CD4-positive, alpha-beta T cell (primary cell): ENCODE measurements at regions of chr6 and their contacts with region 1.

Region 1: DNA sequence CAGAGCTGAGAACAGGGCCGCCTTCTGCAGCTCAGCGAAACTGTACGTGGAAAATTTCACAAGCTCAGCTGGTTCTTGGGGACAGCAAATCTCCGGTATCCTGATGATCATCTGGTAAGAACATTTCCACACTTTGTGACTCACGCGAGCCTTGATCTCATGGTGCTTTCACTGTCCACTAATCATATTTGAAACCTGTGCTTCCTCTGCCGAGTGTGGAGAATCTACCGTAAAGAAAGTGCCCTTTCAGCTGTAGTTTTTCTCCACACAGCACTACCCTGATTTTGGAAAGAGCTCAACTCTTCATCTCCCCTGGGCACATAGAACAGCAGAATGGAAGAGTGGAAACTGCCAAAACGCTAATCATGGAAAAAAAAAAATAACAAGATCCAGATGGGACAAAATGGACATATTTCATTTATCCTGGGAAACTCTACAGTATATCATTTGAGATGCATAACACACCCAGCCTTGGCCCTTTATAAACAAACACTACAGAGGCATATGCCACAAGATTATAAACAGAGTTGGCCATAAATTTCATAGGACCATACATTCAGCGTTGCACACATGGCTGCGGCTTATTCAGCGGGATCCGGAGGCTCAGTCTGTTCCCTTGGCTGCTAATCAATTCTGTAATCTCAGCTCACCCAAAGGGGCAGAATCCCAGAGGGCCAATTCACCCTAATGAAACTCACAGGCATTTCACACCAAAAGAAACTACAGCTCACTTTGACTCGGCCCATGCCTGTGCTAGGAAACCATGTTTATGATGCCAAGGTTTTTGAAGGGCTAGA is 434.5 kb downstream of the HDGFL1 start:
- DNase-seq: no peak
- ATAC-seq: no peak
- H3K4me3 ChIP-seq: no peak overlapping the region
- H3K4me3 Mint-ChIP-seq: no peak overlapping the region
- H3K27ac ChIP-seq: no peak overlapping the region
- H3K27ac Mint-ChIP-seq: no peak overlapping the region
- H3K4me1 ChIP-seq: no peaks in the 10 kb centered on the region
- H3K4me1 Mint-ChIP-seq: no peaks in the 10 kb centered on the region
- H3K27me3 ChIP-seq: no peaks in the 10 kb centered on the region
- H3K27me3 Mint-ChIP-seq: no peaks in the 10 kb centered on the region
- CTCF ChIP-seq: no peak

Region 2: DNA sequence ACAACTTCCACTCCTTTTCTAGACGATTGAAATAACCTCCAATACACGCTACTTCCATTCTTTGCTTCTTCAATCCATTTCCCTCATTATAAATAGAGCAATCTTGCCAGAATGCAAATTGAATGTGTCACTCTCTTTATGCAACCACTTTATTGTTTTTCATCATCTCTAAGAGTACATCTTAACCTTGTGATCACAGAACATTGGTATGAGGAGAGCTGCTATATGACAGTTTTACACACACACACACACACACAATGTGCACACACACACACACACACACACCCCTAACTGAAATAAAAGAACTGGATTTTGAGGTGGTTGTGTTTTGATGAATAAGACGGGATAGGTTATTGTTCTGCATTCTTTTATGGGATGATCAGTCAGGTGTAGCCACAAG is 247.5 kb before region 1 on chr6:
- CTCF ChIA-PET with region 1: no interaction called
- POLR2A ChIA-PET with region 1: no interaction called
- intact Hi-C with region 1: loop called in 1 of 2 experiments (anchors 10 kb)
- DNase-seq: no peak
- ATAC-seq: no peak
- H3K4me3 ChIP-seq: no peak overlapping the region
- H3K4me3 Mint-ChIP-seq: no peak overlapping the region
- H3K27ac ChIP-seq: no peak overlapping the region
- H3K27ac Mint-ChIP-seq: no peak overlapping the region
- H3K4me1 ChIP-seq: no peaks in the 10 kb centered on the region
- H3K4me1 Mint-ChIP-seq: no peaks in the 10 kb centered on the region
- H3K27me3 ChIP-seq: no peaks in the 10 kb centered on the region
- H3K27me3 Mint-ChIP-seq: no peaks in the 10 kb centered on the region
- CTCF ChIP-seq: no peak

Region 3: GRCh38 chr6:23016696-23017095 is 12.8 kb after region 1 on chr6:
- CTCF ChIA-PET with region 1: no interaction called
- POLR2A ChIA-PET with region 1: no interaction called
- intact Hi-C with region 1: no loop called
- DNase-seq: no peak
- ATAC-seq: no peak
- H3K4me3 ChIP-seq: no peak overlapping the region
- H3K4me3 Mint-ChIP-seq: no peak overlapping the region
- H3K27ac ChIP-seq: no peak overlapping the region
- H3K27ac Mint-ChIP-seq: no peak overlapping the region
- H3K4me1 ChIP-seq: no peaks in the 10 kb centered on the region
- H3K4me1 Mint-ChIP-seq: no peaks in the 10 kb centered on the region
- H3K27me3 ChIP-seq: no peaks in the 10 kb centered on the region
- H3K27me3 Mint-ChIP-seq: no peaks in the 10 kb centered on the region
- CTCF ChIP-seq: no peak